Right ventricle myocardium superior (tissue), 1 donor: ENCODE measurements at regions of chr19 and their contacts with region 1.

Region 1: DNA sequence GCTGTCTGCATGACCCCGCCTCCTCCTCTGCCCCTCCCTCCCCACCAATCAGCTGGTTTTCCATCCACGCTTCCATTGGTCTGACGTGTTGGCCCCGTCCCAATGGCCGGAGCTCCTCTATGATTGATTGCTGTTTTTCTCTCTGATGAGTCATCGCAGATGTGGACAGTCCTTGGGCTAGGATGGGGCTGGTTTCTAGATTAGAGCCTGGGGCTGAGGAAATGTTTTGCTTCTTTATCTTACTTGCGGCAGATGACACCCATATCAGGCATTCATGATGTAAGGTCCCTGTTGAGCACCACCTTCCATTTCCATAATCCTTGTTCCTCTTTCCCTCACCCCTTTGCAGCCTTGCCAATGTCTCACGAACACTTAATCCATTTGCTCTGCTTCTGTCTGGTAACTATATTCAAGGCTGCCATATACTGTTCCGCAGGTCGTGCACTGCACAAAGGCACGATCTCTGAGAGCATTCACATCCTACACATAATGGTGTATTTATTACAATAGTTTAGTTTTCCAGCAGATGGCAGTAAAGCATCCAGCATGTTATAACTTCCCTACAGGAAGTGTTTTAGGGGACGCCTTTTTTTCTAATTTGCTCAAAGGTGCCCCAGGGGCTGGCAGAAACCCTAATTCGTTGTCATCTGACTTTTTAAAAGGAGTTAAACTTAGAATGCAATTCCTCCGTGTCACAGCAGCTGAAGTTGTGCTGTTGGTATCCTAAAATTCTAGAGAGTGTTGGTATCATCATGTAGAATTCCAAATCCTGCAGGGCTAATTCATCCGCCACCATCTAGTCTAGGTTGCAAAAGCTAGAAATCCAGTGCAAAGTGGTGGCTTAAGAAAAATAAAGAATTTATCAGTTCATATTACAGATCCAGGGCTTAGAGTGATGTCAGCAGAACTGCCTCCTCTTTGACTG is 73.5 kb downstream of the MAP4K1 start:
- DNase-seq: peak; percentile 66
- ATAC-seq: peak; percentile 91

Region 2: DNA sequence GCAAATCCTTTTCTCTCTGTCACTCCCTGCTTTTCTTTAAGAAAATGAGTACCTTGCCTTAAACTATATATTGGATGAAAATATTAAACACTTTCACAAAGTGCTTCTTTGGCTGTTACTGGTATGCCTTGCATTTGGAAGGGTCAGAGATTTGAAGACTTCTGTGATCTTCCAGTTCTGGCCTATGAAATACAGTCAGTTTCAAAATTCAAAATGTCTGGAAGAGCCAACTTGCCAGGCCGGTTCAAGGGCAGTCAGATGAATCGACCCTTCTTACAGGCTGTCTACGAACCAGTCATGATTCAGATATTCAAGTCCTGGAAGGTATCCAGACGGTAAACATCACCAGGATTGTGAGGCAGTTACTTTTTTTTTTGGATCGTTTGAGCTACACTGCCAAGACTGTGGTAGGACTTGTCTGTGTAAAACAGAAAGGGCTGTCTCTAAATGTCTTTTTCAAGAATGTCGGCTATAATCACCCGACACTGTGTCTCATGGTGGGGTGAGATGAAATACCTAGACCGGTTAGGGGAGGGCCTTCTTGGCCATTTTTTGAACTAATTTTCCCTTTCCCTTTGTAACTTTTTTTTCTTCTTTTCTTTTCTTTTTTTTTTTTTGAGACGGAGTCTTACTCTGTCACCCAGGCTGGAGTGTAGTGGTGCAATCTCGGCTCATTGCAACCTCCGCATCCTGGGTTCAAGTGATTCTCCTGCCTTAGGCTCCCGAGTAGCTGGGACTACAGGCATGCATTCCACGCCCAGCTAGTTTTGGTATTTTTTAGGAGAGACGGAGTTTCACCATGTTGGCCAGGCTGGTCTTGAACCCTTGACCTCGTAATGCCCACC is 114.4 kb after region 1 on chr19:
- intact Hi-C with region 1: no loop called
- DNase-seq: no peak
- ATAC-seq: peak; percentile 68

Region 3: GRCh38 chr19:38949580-38950367 is 405.5 kb after region 1 on chr19:
- intact Hi-C with region 1: loop called (anchors 5 kb)
- DNase-seq: peak; percentile 92
- ATAC-seq: peak; percentile 95